Activated CD4-positive, alpha-beta memory T cell treated with anti-CD3 and anti-CD28 coated beads for 36 hours (primary cell): ENCODE measurements at regions of chr14 and their contacts with region 1.

Region 1: DNA sequence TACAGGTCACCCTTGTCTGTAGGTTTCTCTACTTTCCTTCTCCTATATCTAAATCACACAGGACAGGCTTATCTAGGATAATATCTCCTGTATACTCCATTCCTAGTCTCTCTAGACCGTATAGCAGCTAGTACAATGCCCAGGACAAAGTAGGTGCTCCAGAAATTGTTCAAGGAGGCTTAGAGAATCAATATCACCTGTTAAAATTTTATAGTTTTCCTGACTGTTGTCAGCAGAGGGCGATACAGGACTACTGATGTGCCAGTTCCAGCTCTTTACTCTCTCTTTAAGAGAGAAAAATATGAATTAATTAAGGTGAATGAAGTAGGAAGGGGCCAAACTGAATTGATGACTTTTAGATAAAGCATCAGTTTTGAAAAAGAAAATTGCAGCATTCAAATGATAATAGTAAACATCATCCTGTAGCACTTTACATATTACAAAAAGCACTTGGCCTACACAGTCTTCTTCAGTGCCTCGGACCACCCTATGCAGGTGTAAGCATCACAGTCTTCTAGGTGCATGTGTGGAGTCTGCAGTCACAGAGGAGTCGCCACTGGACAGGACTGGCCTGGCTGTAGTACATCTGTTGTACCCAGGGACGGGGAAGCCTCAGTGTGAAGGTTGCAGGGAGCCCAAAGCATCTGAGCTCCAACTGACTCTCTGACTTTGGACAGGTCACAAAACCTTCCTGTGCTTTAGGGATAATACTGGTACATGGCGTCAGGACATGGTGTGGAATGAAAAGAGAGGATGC is 61.9 kb upstream of the MAX start:
- DNase-seq: peak; percentile 36
- H3K4me3 Mint-ChIP-seq: no peak overlapping the region
- H3K27ac Mint-ChIP-seq: no peak overlapping the region
- H3K4me1 Mint-ChIP-seq: peaks cover 5% of the 10 kb centered on the region
- H3K27me3 Mint-ChIP-seq: no peaks in the 10 kb centered on the region

Region 2: GRCh38 chr14:65141523-65141922 is 22.7 kb before region 1 on chr14:
- CTCF ChIA-PET with region 1: no interaction called
- POLR2A ChIA-PET with region 1: no interaction called
- intact Hi-C with region 1: no loop called
- DNase-seq: no peak
- H3K4me3 Mint-ChIP-seq: no peak overlapping the region
- H3K27ac Mint-ChIP-seq: no peak overlapping the region
- H3K4me1 Mint-ChIP-seq: no peaks in the 10 kb centered on the region
- H3K27me3 Mint-ChIP-seq: peaks cover 6% of the 10 kb centered on the region

Region 3: DNA sequence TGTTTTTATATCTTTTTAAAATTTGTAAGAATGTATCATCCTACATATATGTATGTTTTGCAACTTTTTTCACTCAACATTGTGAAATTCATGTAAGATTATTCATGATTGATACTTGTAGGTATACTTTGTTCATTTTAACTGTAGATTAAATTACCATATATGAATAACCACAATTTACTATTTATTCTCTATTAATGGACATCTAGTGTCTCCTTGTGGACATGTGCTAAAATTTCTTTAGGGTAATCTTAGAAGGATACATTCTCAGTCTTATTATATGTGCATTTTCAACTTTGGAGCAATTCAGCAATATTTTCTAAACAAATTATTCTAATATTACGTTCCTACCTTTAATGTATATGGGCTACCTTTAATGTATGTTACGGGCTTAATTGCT is 440.7 kb after region 1 on chr14:
- CTCF ChIA-PET with region 1: no interaction called
- POLR2A ChIA-PET with region 1: no interaction called
- intact Hi-C with region 1: loop called (anchors 10 kb)
- DNase-seq: no peak
- H3K4me3 Mint-ChIP-seq: no peak overlapping the region
- H3K27ac Mint-ChIP-seq: no peak overlapping the region
- H3K4me1 Mint-ChIP-seq: peaks cover 5% of the 10 kb centered on the region
- H3K27me3 Mint-ChIP-seq: no peaks in the 10 kb centered on the region

Region 4: DNA sequence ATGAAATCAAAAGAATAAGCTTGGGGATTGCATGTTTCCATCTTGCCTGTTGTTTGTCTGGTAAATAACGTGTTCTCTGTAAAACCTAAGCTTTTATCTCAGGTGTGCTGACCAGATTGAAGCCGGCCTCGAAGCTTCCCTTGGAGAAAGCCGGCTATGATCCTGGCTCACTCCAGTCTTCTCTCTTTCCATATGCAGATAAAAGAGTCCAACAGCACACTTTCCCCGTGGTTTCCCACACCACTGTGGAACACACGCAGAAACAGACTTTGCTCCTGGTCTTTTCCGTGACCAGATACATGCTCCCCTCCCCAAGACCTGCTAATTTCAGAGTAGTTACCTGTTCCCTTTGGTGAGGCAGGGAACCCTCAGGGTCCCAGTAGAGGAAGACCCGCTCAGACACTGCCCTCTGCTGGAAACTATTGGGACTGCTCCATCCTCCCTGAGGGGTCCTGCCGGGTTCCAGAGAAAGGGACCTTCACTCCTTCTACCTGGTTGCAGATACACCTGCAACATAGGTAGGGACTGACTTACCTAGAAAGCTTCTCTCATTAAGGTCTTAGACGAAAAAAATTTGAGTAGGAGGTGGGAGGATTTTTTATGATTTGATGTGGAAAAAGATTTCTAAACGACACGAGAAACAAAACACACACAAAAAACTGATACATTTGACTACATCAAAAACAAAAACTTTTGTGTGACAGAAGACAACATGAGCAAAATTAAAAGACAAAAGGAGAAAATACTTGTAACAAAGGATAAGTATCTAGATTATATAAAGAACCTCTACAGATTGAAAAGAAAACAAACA is 906.5 kb after region 1 on chr14:
- CTCF ChIA-PET with region 1: interaction called, 33 read pairs
- POLR2A ChIA-PET with region 1: no interaction called
- intact Hi-C with region 1: loop called (anchors 2 kb)
- DNase-seq: peak; percentile 72
- H3K4me3 Mint-ChIP-seq: no peak overlapping the region
- H3K27ac Mint-ChIP-seq: no peak overlapping the region
- H3K4me1 Mint-ChIP-seq: no peaks in the 10 kb centered on the region
- H3K27me3 Mint-ChIP-seq: peaks cover 1% of the 10 kb centered on the region